ENCODE measurements at regions of chr4 and their contacts with region 1.

Region 1: GRCh38 chr4:78612398-78613178 is 61.0 kb downstream of the ANXA3 start:
- DNase-seq: peak; percentile 69 to 74 (median 73)
- H3K4me3 ChIP-seq: peak overlapping the region in 2 of 7 experiments; percentile 5 to 17
- H3K27ac ChIP-seq: no peak overlapping the region
- H3K4me1 ChIP-seq: peaks cover 46 to 76% (median 60%) of the 10 kb centered on the region in 4 experiments
- H3K27me3 ChIP-seq: no peaks in the 10 kb centered on the region

Region 2: DNA sequence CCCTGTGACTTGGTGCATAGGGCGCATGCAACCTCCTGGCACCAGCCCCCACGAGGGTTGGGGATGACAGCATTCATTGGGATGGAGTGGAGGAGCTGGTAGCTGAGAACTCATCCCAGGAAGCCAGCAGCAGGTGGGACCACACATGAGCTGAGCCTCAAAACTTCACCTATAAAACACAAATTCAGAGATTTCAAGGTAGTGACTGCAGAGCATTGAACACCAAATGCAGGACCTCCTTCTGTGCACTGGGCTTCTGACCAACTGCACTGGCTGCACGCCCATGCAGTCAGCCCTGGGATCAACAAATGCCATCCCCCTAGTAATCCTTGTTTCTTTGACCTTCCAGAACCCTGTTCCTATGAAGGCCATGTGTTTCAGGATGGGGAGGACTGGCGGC is 357.7 kb before region 1 on chr4:
- CTCF ChIA-PET with region 1: no interaction called
- POLR2A ChIA-PET with region 1: no interaction called
- DNase-seq: no peak
- H3K4me3 ChIP-seq: no peak overlapping the region
- H3K27ac ChIP-seq: no peak overlapping the region
- H3K4me1 ChIP-seq: no peaks in the 10 kb centered on the region
- H3K27me3 ChIP-seq: no peaks in the 10 kb centered on the region

Region 3: DNA sequence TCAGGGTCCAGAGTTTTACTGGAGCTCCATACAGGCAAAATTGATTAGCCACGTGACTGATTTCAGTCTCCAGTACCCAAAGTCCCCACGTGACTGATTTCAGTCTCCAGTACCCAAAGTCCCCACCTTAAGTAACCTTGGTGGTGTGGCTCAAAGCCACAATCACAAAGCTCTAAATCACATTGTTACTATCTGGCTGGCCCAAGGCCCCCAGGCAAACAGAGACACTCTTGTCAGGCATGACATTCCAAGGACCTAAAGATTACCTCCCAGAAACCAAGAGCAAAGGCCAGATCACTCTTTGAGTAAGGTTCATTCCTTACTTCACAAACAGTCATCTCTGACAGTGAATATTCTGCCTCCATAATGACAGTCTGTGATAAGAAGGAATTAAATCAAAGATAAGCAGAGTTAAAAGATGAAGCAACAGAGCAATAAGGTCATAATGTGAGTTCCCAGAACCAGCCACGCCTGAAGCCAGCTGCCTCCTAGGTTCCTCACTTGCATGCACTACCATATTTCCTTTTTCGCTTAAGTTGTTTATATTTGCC is 17.5 kb after region 1 on chr4:
- CTCF ChIA-PET with region 1: interaction called, 23 read pairs
- POLR2A ChIA-PET with region 1: no interaction called
- DNase-seq: peak in 2 of 3 donors; percentile 61 to 70
- H3K4me3 ChIP-seq: no peak overlapping the region
- H3K27ac ChIP-seq: peak overlapping the region in 1 of 2 experiments; percentile 65
- H3K4me1 ChIP-seq: peaks cover 3 to 39% (median 27%) of the 10 kb centered on the region in 4 experiments
- H3K27me3 ChIP-seq: no peaks in the 10 kb centered on the region

Region 4: GRCh38 chr4:78864405-78865024 is 251.9 kb after region 1 on chr4:
- CTCF ChIA-PET with region 1: interaction called, 19 read pairs
- POLR2A ChIA-PET with region 1: no interaction called
- DNase-seq: peak; percentile 90 to 95 (median 93)
- H3K4me3 ChIP-seq: no peak overlapping the region
- H3K27ac ChIP-seq: no peak overlapping the region
- H3K4me1 ChIP-seq: peaks cover 0 to 2% (median 0%) of the 10 kb centered on the region in 4 experiments
- H3K27me3 ChIP-seq: no peaks in the 10 kb centered on the region

Measured in common myeloid progenitor, CD34-positive (primary cell).